ENCODE measurements at regions of chr4 and their contacts with region 1.

Region 1: DNA sequence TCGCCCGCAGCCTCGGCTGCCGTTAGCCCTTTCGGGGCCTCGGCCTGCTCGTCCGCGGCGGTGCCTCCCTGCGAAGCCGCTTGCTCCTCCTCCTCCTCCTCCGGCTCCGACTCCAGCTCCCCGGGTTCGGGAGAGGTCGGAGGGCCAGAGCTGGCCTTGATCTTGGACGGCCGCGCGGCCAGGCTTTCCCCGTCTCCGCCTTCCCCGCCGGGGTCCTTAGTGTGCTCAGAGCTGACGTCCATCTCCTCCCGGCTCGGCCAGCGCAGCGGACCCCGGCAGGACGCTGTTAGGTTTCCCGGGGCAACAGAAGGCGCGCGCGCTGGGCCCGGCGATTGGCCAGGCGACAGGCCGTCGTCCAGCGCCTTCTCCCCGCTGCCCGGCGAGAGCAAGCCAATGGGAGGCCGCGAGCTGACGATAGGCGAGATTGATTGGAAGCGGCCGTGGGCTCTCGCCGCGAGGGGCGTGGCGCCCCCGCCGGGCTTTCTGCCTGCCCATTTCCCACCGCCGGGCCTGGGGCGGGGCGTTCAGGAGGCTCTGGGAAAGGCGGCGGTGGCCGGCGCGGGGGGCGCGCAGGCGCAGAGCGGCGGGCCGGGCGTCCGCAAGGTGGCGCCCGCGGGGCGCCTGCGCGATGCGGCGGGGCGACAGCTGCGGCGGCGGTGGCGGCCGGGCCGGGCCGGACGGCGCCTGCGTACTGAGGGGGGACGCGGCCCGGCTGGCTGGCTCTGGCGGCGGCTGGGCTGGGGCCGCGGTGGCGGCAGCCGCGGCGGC is at the start of gene TADA2B:
- DNase-seq: peak; percentile 96 to 99 (median 98)
- ATAC-seq: peak; percentile 93 to 97 (median 95)
- H3K4me3 ChIP-seq: peak within 1 kb of the TSS; percentile 86 to 99 (median 99)
- H3K27ac ChIP-seq: peak within 1 kb of the TSS; percentile 79 to 95 (median 92)
- H3K4me1 ChIP-seq: peaks cover 8 to 56% (median 45%) of the 10 kb centered on the region in 12 donors
- H3K27me3 ChIP-seq: no peaks in the 10 kb centered on the region
- CTCF ChIP-seq: peak in 11 of 12 donors; percentile 17 to 60 (median 47)
- POLR2A ChIP-seq: peak in 1 of 2 donors; percentile 34
- total RNA-seq, gene TADA2B: 24.5 to 40.2 (median 30.8) TPM

Region 2: DNA sequence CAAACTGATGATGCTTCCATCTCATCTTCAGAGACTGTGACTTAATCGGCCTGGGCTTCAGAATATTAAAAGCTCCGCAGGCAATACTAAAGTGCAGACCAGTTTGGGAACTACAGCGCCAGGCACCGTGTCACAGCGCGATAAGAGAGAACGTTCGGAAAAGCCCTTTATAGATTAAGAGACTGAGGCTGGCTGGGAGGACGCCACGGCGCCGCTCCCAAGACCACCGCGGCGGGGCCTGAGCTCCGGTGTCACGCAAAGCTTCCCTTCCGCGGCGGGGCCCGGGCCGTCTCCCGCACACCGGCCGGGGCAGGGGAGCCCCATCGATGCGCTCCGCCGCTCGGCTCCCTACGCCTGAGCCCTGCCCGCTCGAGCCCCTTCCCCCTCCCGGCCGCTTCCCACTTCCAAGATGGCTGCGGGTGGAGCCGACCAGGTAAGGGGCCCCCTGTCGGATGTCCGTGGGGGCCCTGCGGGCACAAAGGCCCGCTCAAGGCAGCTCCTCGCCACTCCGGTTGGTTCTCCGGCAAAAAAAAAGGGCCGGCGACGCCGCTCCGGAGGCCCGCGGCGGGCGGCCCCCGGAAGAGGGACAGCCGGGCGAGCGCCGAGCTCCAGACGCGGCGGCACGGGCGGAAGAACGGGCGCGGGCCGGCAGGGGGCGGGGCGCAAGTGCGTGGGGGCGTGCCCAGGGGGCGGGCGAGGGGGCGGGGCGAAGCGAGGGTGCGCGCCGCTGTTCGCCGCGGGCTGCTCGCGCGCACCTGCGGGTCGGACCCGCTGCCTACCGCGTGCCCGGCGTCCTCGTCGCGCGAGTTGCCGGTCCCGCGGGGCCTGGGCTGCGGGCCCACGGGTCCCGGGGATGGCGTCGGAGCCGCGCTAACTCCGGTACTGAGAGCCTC is 133.6 kb before region 1 on chr4 and contains the start of gene TBC1D14:
- intact Hi-C with region 1: loop called in 2 of 10 experiments (anchors 10 kb)
- DNase-seq: peak; percentile 90 to 95 (median 91)
- ATAC-seq: peak; percentile 71 to 95 (median 94)
- H3K4me3 ChIP-seq: peak within 1 kb of the TSS; percentile 54 to 99 (median 90)
- H3K27ac ChIP-seq: peak within 1 kb of the TSS; percentile 95 to 100 (median 99)
- H3K4me1 ChIP-seq: peaks cover 4 to 57% (median 34%) of the 10 kb centered on the region in 12 donors
- H3K27me3 ChIP-seq: no peaks in the 10 kb centered on the region
- CTCF ChIP-seq: peak in 7 of 12 donors; percentile 15 to 45 (median 31)
- POLR2A ChIP-seq: peak in 1 of 2 donors; percentile 55
- total RNA-seq, gene TBC1D14: 31.3 to 51.0 (median 34.5) TPM

Region 3: DNA sequence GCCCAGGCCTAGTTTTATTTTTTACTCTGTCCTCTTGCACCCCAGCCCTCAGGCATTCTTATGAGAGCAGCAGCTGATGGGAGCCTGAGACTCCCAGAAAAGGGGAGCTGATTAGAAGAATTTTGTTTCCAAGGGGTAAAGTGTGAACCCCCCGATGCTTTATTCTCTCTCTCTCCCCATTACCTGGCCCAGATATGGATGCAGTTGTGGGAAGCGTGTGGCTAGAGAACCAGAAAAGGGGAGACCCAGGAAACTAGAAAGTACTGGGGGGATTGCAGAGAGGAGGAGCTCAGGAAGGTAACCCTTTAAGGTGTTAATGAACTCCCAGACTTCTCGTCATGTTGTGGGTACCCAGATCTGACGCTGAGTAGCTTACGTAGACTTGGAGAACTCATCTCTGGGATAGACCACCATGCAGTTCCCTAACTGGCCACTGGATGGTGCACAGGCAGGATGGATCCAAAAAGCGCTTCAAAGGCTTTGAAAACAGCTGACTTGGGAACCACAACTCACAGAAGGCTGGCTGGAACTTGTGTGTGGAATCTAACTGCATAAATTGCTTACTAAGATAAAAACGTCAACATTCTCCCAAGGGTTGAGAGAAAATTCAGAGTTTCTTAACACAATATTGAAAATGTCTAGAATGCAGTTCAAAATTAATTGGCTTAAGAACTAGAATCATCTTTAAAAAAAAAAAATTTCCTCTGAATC is 68.6 kb before region 1 on chr4:
- intact Hi-C with region 1: no loop called
- DNase-seq: peak; percentile 79 to 83 (median 81)
- ATAC-seq: peak; percentile 81 to 92 (median 92)
- H3K4me3 ChIP-seq: no peak overlapping the region
- H3K27ac ChIP-seq: peak overlapping the region in 1 of 12 donors; percentile 13
- H3K4me1 ChIP-seq: peaks cover 0 to 24% (median 0%) of the 10 kb centered on the region in 12 donors
- H3K27me3 ChIP-seq: no peaks in the 10 kb centered on the region
- CTCF ChIP-seq: peak; percentile 92 to 98 (median 96)
- POLR2A ChIP-seq: no peak

Region 4: DNA sequence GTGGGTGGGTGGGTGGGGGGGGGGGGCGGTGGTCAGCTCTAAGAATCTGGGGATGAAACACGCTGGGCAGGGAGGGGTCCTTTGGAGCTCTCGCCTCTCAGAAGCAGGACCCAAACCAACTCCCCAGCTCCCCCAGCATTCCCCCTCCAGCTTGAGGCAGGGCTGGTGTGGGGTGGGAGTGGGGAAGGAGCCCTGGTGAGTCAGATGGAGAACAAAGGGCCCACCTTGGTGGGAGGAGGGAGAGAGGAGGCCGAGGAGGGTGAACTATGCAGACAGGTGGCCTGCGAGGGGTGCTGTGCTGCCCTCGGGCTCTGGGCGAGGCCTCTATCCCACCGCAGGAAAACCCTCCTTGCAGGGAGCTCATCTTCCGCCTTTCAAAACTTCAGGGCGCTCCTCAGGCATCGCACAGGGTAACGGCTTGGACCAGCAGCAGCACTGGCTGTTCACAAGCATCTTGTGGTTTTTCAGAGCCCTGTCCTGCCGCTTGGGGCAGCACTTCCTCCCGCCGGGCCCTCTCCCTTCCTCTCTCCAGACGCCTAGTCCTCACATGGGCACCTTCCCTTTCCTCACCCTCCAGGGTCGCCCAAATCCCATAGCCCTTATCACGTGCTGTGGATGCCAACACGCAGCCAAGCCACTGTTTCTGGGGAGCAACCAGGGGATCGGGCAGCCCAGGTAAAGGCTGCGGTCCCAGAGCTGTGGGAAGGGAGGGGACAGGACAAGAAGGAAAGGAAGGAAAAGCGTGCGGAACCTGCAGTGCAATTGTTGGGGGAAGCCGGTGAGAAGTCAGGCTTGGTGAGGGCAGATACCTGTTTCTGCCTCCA is 59.0 kb after region 1 on chr4:
- intact Hi-C with region 1: loop called in 1 of 10 experiments (anchors 5 kb)
- DNase-seq: peak; percentile 68 to 89 (median 75)
- ATAC-seq: peak; percentile 70 to 79 (median 76)
- H3K4me3 ChIP-seq: peak overlapping the region in 11 of 12 donors; percentile 54 to 75 (median 66)
- H3K27ac ChIP-seq: peak overlapping the region in 6 of 12 donors; percentile 72 to 90 (median 88)
- H3K4me1 ChIP-seq: peaks cover 0 to 28% (median 16%) of the 10 kb centered on the region in 12 donors
- H3K27me3 ChIP-seq: no peaks in the 10 kb centered on the region
- CTCF ChIP-seq: peak; percentile 56 to 88 (median 73)
- POLR2A ChIP-seq: no peak